CD4-positive, alpha-beta T cell (primary cell): ENCODE measurements at regions of chr7 and their contacts with region 1.

Region 1: GRCh38 chr7:65373608-65374351 is at the start of gene ZNF92:
- DNase-seq: peak; percentile 89 to 98 (median 92)
- ATAC-seq: peak; percentile 98
- H3K4me3 ChIP-seq: peak within 1 kb of the TSS; percentile 97
- H3K4me3 Mint-ChIP-seq: peak within 1 kb of the TSS; percentile 95
- H3K27ac ChIP-seq: peak within 1 kb of the TSS; percentile 67 to 85
- H3K27ac Mint-ChIP-seq: peak within 1 kb of the TSS; percentile 94
- H3K4me1 ChIP-seq: peaks cover 38% of the 10 kb centered on the region
- H3K4me1 Mint-ChIP-seq: peaks cover 47% of the 10 kb centered on the region
- H3K27me3 ChIP-seq: no peaks in the 10 kb centered on the region
- H3K27me3 Mint-ChIP-seq: no peaks in the 10 kb centered on the region
- CTCF ChIP-seq: no peak
- total RNA-seq, gene ZNF92: 29.7 to 30.1 TPM

Region 2: DNA sequence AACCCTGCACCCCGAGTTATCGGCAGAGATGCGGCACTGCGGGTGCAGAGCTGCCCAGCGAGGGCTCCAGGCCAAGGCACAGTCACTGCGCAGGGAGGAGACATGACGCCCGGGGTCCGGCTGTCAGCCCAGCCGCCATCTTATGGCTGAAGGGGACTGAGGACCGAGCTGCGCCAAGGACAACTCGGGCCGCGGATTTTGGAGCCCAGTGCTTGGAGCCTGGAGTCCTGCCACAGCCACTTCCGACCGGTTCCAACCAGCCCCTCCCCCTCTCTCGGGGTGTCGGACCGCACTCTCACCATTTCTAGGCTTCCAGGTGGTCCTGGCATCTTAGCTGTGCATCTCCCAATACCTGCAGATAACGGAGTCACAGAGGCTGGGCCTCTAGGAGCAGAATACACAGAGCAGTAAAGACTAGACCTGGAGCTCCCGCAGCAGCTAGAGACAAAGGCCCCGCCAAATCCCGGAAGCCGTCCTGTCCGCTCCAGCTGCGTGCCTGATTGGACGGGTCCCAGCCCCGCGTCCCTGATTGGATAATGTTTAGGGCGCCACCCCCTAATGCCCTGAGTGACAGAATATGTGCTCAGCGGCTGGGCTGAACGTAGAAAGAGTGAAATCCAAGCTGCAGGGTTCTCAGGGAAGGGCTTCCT is 811.0 kb before region 1 on chr7 and contains the start of gene ZNF680:
- CTCF ChIA-PET with region 1: no interaction called
- POLR2A ChIA-PET with region 1: interaction called, 5 read pairs
- intact Hi-C with region 1: loop called in 1 of 2 experiments (anchors 5 kb)
- DNase-seq: peak; percentile 79 to 95 (median 84)
- ATAC-seq: peak; percentile 98
- H3K4me3 ChIP-seq: peak within 1 kb of the TSS; percentile 93
- H3K4me3 Mint-ChIP-seq: peak within 1 kb of the TSS; percentile 100
- H3K27ac ChIP-seq: peak within 1 kb of the TSS; percentile 41
- H3K27ac Mint-ChIP-seq: peak within 1 kb of the TSS; percentile 88
- H3K4me1 ChIP-seq: peaks cover 21% of the 10 kb centered on the region
- H3K4me1 Mint-ChIP-seq: peaks cover 41% of the 10 kb centered on the region
- H3K27me3 ChIP-seq: no peaks in the 10 kb centered on the region
- H3K27me3 Mint-ChIP-seq: no peaks in the 10 kb centered on the region
- CTCF ChIP-seq: no peak
- total RNA-seq, gene ZNF680: 8.3 to 8.9 TPM

Region 3: GRCh38 chr7:65006094-65006992 is 367.4 kb before region 1 on chr7 and contains the start of gene ERV3-1:
- CTCF ChIA-PET with region 1: no interaction called
- POLR2A ChIA-PET with region 1: interaction called, 22 read pairs
- intact Hi-C with region 1: loop called in 1 of 2 experiments (anchors 10 kb)
- DNase-seq: peak; percentile 84 to 97 (median 90)
- ATAC-seq: peak; percentile 99
- H3K4me3 ChIP-seq: peak within 1 kb of the TSS; percentile 75
- H3K4me3 Mint-ChIP-seq: peak within 1 kb of the TSS; percentile 96
- H3K27ac ChIP-seq: peak within 1 kb of the TSS; percentile 49
- H3K27ac Mint-ChIP-seq: peak within 1 kb of the TSS; percentile 88
- H3K4me1 ChIP-seq: peaks cover 21% of the 10 kb centered on the region
- H3K4me1 Mint-ChIP-seq: peaks cover 45% of the 10 kb centered on the region
- H3K27me3 ChIP-seq: no peaks in the 10 kb centered on the region
- H3K27me3 Mint-ChIP-seq: no peaks in the 10 kb centered on the region
- CTCF ChIP-seq: no peak
- total RNA-seq, gene ERV3-1: 16.6 to 17.2 TPM

Region 4: GRCh38 chr7:65037740-65038678 is 335.8 kb before region 1 on chr7:
- CTCF ChIA-PET with region 1: no interaction called
- POLR2A ChIA-PET with region 1: interaction called, 10 read pairs
- intact Hi-C with region 1: loop called in 1 of 2 experiments (anchors 2 kb)
- DNase-seq: peak; percentile 88 to 98 (median 93)
- ATAC-seq: peak; percentile 87
- H3K4me3 ChIP-seq: peak overlapping the region; percentile 63
- H3K4me3 Mint-ChIP-seq: peak overlapping the region; percentile 86
- H3K27ac ChIP-seq: peak overlapping the region in 1 of 2 donors; percentile 56
- H3K27ac Mint-ChIP-seq: peak overlapping the region; percentile 57
- H3K4me1 ChIP-seq: peaks cover 5% of the 10 kb centered on the region
- H3K4me1 Mint-ChIP-seq: peaks cover 17% of the 10 kb centered on the region
- H3K27me3 ChIP-seq: no peaks in the 10 kb centered on the region
- H3K27me3 Mint-ChIP-seq: no peaks in the 10 kb centered on the region
- CTCF ChIP-seq: no peak

Region 5: DNA sequence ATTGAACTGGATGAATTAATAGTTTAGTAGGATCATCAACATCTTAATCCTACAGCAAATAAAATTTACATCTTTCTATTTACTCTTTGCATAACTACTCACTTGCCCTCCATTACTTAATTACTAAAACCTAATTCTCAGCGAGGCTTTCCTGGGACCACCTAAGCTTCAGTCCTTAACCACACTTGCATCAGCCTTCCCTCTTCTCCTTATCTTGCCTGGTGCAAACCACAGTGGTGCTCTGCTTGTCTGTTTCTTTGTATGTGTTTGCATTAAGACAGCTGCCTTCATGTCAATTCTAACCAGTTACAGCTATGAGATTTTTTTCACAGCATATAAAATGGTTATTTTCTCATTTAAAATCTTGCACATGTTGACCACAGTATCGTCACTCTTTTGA is 72.8 kb before region 1 on chr7:
- CTCF ChIA-PET with region 1: no interaction called
- POLR2A ChIA-PET with region 1: no interaction called
- intact Hi-C with region 1: no loop called
- DNase-seq: no peak
- ATAC-seq: no peak
- H3K4me3 ChIP-seq: no peak overlapping the region
- H3K4me3 Mint-ChIP-seq: no peak overlapping the region
- H3K27ac ChIP-seq: no peak overlapping the region
- H3K27ac Mint-ChIP-seq: no peak overlapping the region
- H3K4me1 ChIP-seq: no peaks in the 10 kb centered on the region
- H3K4me1 Mint-ChIP-seq: no peaks in the 10 kb centered on the region
- H3K27me3 ChIP-seq: peaks cover 3% of the 10 kb centered on the region in 2 experiments
- H3K27me3 Mint-ChIP-seq: peaks cover 30% of the 10 kb centered on the region
- CTCF ChIP-seq: no peak

Region 6: DNA sequence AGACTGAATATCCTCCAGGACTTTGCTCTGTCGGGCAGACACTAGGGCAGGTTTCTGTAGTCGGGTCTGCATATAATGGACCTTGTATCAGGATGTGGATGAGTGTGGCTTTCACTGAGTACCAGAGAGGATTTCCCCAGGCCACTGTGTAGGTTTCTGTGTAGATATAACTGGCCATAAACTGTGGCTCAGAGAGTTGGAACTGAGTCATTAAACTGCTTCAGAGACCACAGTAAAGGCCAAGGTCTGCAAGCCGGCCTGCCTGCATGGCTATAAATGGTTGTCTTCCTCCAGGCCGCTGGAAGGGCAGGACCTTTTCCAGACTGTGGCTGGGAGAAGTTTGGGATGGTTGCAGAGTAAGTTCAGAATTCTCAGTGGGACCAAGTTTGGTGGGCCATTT is 16.8 kb after region 1 on chr7:
- CTCF ChIA-PET with region 1: no interaction called
- POLR2A ChIA-PET with region 1: no interaction called
- intact Hi-C with region 1: no loop called
- DNase-seq: no peak
- ATAC-seq: no peak
- H3K4me3 ChIP-seq: no peak overlapping the region
- H3K4me3 Mint-ChIP-seq: no peak overlapping the region
- H3K27ac ChIP-seq: no peak overlapping the region
- H3K27ac Mint-ChIP-seq: no peak overlapping the region
- H3K4me1 ChIP-seq: peaks cover 6% of the 10 kb centered on the region
- H3K4me1 Mint-ChIP-seq: peaks cover 22% of the 10 kb centered on the region
- H3K27me3 ChIP-seq: no peaks in the 10 kb centered on the region
- H3K27me3 Mint-ChIP-seq: no peaks in the 10 kb centered on the region
- CTCF ChIP-seq: no peak

Region 7: DNA sequence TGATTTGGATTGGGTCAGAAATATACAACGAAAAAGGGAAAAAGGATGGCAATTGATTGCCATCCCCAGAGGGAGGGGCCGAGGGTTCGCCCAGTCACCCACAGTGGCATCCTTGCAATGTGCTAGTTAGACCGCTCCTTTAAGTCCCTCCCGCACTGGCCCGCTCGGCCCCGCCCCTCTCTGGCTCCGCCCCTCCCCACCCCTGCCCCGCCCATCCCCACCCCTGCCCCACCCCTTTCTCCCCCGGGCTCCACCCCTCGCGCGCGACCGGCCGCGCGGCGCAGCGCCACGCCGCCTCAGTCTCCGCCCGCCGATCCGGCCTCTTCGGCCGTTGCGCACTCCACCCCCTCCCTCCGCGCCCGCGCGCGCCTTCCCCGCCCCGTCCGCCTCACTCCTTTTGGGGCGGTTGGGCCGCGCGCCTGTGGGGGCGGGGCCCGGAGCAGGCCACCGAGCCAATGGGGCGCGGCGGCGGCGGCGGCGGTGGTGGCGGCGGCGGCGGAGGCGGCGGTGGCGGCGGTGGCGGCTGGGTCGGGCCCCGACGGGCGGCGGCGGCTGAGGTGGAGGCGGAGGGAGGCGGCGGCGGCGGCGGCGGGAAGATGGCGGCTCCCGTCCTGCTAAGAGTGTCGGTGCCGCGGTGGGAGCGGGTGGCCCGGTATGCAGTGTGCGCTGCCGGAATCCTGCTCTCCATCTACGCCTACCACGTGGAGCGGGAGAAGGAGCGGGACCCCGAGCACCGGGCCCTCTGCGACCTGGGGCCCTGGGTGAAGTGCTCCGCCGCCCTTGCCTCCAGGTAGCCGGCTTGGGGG is 499.2 kb after region 1 on chr7 and contains the start of gene VKORC1L1:
- CTCF ChIA-PET with region 1: no interaction called
- POLR2A ChIA-PET with region 1: no interaction called
- intact Hi-C with region 1: loop called in 1 of 2 experiments (anchors 10 kb)
- DNase-seq: peak; percentile 89 to 97 (median 96)
- ATAC-seq: peak; percentile 87
- H3K4me3 ChIP-seq: peak within 1 kb of the TSS; percentile 68
- H3K4me3 Mint-ChIP-seq: peak within 1 kb of the TSS; percentile 91
- H3K27ac ChIP-seq: no peak within 1 kb of the TSS
- H3K27ac Mint-ChIP-seq: peak within 1 kb of the TSS; percentile 80
- H3K4me1 ChIP-seq: peaks cover 13% of the 10 kb centered on the region
- H3K4me1 Mint-ChIP-seq: peaks cover 12% of the 10 kb centered on the region
- H3K27me3 ChIP-seq: no peaks in the 10 kb centered on the region
- H3K27me3 Mint-ChIP-seq: no peaks in the 10 kb centered on the region
- CTCF ChIP-seq: no peak
- total RNA-seq, gene VKORC1L1: 1.9 to 3.0 TPM

Region 8: GRCh38 chr7:66920769-66921395 is 1547.1 kb after region 1 on chr7 and contains the start of gene TMEM248:
- CTCF ChIA-PET with region 1: no interaction called
- POLR2A ChIA-PET with region 1: no interaction called
- intact Hi-C with region 1: loop called in 1 of 2 experiments (anchors 10 kb)
- DNase-seq: peak; percentile 85 to 96 (median 91)
- ATAC-seq: peak; percentile 86
- H3K4me3 ChIP-seq: peak within 1 kb of the TSS; percentile 95
- H3K4me3 Mint-ChIP-seq: peak within 1 kb of the TSS; percentile 100
- H3K27ac ChIP-seq: peak within 1 kb of the TSS; percentile 76 to 90
- H3K27ac Mint-ChIP-seq: peak within 1 kb of the TSS; percentile 99
- H3K4me1 ChIP-seq: peaks cover 42% of the 10 kb centered on the region
- H3K4me1 Mint-ChIP-seq: peaks cover 43% of the 10 kb centered on the region
- H3K27me3 ChIP-seq: no peaks in the 10 kb centered on the region
- H3K27me3 Mint-ChIP-seq: no peaks in the 10 kb centered on the region
- CTCF ChIP-seq: no peak
- total RNA-seq, gene TMEM248: 64.7 to 67.4 TPM